Esophagus squamous epithelium (tissue), 5 donors: ENCODE measurements at regions of chr1 and their contacts with region 1.

Region 1: GRCh38 chr1:159207774-159208173 is 3.1 kb downstream of the ACKR1 start:
- DNase-seq: no peak
- H3K4me3 ChIP-seq: peak overlapping the region in 3 of 4 donors; percentile 19 to 52 (median 41)
- H3K27ac ChIP-seq: peak overlapping the region in 2 of 4 donors; percentile 16 to 44
- H3K4me1 ChIP-seq: peaks cover 0 to 6% (median 0%) of the 10 kb centered on the region in 3 donors
- H3K27me3 ChIP-seq: peaks cover 0 to 88% (median 2%) of the 10 kb centered on the region in 4 donors
- CTCF ChIP-seq: no peak
- POLR2A ChIP-seq: no peak

Region 2: GRCh38 chr1:159141584-159142390 is 66.0 kb before region 1 on chr1:
- intact Hi-C with region 1: loop called (anchors 10 kb)
- DNase-seq: no peak
- H3K4me3 ChIP-seq: no peak overlapping the region
- H3K27ac ChIP-seq: no peak overlapping the region
- H3K4me1 ChIP-seq: no peaks in the 10 kb centered on the region
- H3K27me3 ChIP-seq: peaks cover 0 to 57% (median 0%) of the 10 kb centered on the region in 4 donors
- CTCF ChIP-seq: no peak
- POLR2A ChIP-seq: no peak